Caco-2 (cell line): ENCODE measurements at regions of chr6 and their contacts with region 1.

Region 1: DNA sequence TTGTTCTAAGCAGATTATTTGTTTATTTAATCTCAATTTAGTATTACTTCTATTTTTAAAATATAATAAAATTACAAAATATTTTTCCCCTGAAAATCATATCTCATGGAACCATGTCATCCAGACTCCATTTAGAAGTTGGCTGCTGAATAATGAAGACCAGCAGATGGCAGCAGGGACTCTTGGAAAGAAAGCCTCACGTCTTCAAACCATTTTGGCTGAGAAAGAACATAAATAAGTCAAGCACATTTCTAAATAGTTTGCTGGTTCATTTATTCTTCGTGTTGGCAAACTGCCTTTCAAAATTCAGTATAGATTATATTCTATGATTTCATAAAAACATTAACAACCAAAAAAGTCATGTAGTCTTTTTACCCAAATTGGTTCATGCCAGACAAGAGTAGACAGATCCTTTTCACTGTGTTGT is 71.7 kb downstream of the RCAN2 start:
- DNase-seq: peak; percentile 42 to 47
- H3K4me3 ChIP-seq: no peak overlapping the region
- H3K4me3 Mint-ChIP-seq: no peak overlapping the region
- H3K27ac Mint-ChIP-seq: no peak overlapping the region
- H3K4me1 ChIP-seq: no peaks in the 10 kb centered on the region
- H3K4me1 Mint-ChIP-seq: peaks cover 6% of the 10 kb centered on the region
- H3K27me3 ChIP-seq: no peaks in the 10 kb centered on the region
- H3K27me3 Mint-ChIP-seq: peaks cover 10% of the 10 kb centered on the region
- CTCF ChIP-seq: peak; percentile 67 to 81

Region 2: GRCh38 chr6:45930420-45931040 is 489.1 kb before region 1 on chr6:
- CTCF ChIA-PET with region 1: no interaction called
- POLR2A ChIA-PET with region 1: no interaction called
- intact Hi-C with region 1: loop called (anchors 10 kb)
- DNase-seq: peak; percentile 69 to 75
- H3K4me3 ChIP-seq: no peak overlapping the region
- H3K4me3 Mint-ChIP-seq: no peak overlapping the region
- H3K27ac Mint-ChIP-seq: no peak overlapping the region
- H3K4me1 ChIP-seq: 0 out of 2 replicates have a peak, but pooled peaks cover 4% of the 10 kb centered on the region
- H3K4me1 Mint-ChIP-seq: no peaks in the 10 kb centered on the region
- H3K27me3 ChIP-seq: no peaks in the 10 kb centered on the region
- H3K27me3 Mint-ChIP-seq: no peaks in the 10 kb centered on the region
- CTCF ChIP-seq: peak; percentile 92 to 93

Region 3: GRCh38 chr6:46626228-46626909 is 206.8 kb after region 1 on chr6:
- CTCF ChIA-PET with region 1: no interaction called
- POLR2A ChIA-PET with region 1: no interaction called
- intact Hi-C with region 1: loop called (anchors 1 kb)
- DNase-seq: peak in 1 of 2 experiments; percentile 16
- H3K4me3 ChIP-seq: no peak overlapping the region
- H3K4me3 Mint-ChIP-seq: no peak overlapping the region
- H3K27ac Mint-ChIP-seq: no peak overlapping the region
- H3K4me1 ChIP-seq: no peaks in the 10 kb centered on the region
- H3K4me1 Mint-ChIP-seq: no peaks in the 10 kb centered on the region
- H3K27me3 ChIP-seq: no peaks in the 10 kb centered on the region
- H3K27me3 Mint-ChIP-seq: peaks cover 8% of the 10 kb centered on the region
- CTCF ChIP-seq: peak; percentile 35 to 64

Region 4: GRCh38 chr6:46848684-46849360 is 429.2 kb after region 1 on chr6:
- CTCF ChIA-PET with region 1: no interaction called
- POLR2A ChIA-PET with region 1: no interaction called
- intact Hi-C with region 1: loop called (anchors 2 kb)
- DNase-seq: peak; percentile 74 to 90
- H3K4me3 ChIP-seq: no peak overlapping the region
- H3K4me3 Mint-ChIP-seq: peak overlapping the region; percentile 55
- H3K27ac Mint-ChIP-seq: peak overlapping the region; percentile 2
- H3K4me1 ChIP-seq: no peaks in the 10 kb centered on the region
- H3K4me1 Mint-ChIP-seq: peaks cover 12% of the 10 kb centered on the region
- H3K27me3 ChIP-seq: no peaks in the 10 kb centered on the region
- H3K27me3 Mint-ChIP-seq: no peaks in the 10 kb centered on the region
- CTCF ChIP-seq: peak; percentile 94 to 95

Region 5: DNA sequence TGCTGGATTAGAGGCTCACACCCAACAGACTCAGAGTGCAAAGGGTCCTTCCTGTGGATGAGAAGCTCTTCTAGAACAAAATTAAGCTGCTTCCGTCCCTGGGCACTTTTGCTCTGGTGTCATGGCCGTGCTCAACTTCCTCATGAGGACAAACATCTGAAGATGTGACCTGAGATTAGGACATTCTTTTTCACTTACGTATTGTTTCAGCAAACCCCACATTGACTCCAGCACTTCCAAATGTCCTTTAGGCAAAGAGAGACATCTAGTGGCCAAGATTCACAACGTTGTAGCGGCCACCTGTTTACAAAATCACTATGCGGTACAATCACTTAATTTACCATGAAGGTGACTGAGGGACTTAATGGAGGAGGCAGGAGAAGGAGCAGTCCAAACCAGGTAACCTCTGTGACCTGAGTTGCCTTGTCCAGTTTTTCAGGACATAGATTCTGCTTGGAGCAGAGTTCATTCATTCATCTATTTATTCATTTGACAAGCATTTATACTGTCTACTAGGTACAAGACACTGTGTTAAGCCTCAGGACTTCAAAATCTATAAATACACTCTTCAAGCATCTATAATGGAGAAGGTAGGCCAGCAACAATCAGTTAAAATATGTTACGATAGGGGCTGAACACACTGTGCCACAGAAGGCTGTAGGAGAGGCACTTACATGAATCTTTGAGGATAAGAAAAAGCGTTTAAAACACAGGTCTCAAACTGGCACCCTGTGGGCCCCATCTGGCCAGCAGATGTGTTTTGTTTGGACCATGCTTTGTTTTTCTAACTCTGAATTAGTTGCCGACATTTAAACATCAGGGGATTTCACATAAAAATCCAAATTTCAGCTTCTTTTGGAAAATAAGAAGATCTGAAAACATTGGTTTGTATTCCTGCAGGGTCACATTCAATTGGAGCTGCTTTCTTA is 628.2 kb after region 1 on chr6:
- CTCF ChIA-PET with region 1: no interaction called
- POLR2A ChIA-PET with region 1: no interaction called
- intact Hi-C with region 1: loop called (anchors 1 kb)
- DNase-seq: peak; percentile 62 to 74
- H3K4me3 ChIP-seq: no peak overlapping the region
- H3K4me3 Mint-ChIP-seq: peak overlapping the region; percentile 37
- H3K27ac Mint-ChIP-seq: peak overlapping the region; percentile 46
- H3K4me1 ChIP-seq: peaks cover 12% of the 10 kb centered on the region
- H3K4me1 Mint-ChIP-seq: peaks cover 6% of the 10 kb centered on the region
- H3K27me3 ChIP-seq: no peaks in the 10 kb centered on the region
- H3K27me3 Mint-ChIP-seq: no peaks in the 10 kb centered on the region
- CTCF ChIP-seq: peak; percentile 78 to 79